ENCODE measurements at regions of chr10 and their contacts with region 1.

Region 1: DNA sequence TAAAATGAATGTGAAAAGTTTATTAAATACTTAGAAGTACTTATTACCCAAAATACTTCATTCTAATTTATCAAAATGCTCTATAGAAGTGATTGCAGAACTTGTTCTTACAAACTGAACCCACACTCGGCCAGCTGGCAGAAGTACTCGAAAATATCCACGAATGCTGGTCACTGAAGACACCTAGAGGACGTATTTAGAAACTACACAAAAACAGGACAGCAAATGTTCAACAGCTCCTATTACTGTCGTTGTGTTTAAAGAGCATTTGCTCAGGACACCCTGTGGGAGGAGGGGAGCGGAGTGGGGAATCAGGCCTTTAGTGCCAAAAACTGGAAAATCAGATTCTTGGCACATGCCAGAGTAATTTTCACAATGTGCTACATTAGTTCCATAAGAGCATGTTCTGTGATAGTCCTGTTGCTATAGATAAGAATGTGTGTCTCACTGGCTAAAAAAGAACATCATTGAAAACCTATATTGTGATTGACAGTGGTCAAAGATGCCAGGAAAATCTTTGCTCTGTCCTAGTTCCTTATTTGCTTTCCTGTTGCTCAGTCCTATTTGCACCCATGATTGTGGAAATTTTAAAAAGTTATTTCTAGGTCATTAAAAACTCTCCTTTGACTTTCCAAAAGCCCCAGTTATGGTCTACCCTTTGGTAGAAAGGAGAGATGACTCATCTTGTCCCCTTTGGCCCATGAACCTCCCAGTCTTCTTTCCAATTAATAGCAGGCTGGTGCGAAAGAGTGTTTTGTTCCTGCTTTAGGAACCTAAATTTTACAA is 49.0 kb upstream of the NRBF2 start:
- DNase-seq: peak in 7 of 9 donors; percentile 20 to 58 (median 43)
- ATAC-seq: peak; percentile 78
- H3K4me3 ChIP-seq: no peak overlapping the region
- H3K4me3 Mint-ChIP-seq: no peak overlapping the region
- H3K27ac ChIP-seq: no peak overlapping the region
- H3K27ac Mint-ChIP-seq: no peak overlapping the region
- H3K4me1 ChIP-seq: no peaks in the 10 kb centered on the region
- H3K4me1 Mint-ChIP-seq: no peaks in the 10 kb centered on the region
- H3K27me3 ChIP-seq: no peaks in the 10 kb centered on the region
- H3K27me3 Mint-ChIP-seq: peaks cover 4 to 31% (median 6%) of the 10 kb centered on the region in 5 donors

Region 2: DNA sequence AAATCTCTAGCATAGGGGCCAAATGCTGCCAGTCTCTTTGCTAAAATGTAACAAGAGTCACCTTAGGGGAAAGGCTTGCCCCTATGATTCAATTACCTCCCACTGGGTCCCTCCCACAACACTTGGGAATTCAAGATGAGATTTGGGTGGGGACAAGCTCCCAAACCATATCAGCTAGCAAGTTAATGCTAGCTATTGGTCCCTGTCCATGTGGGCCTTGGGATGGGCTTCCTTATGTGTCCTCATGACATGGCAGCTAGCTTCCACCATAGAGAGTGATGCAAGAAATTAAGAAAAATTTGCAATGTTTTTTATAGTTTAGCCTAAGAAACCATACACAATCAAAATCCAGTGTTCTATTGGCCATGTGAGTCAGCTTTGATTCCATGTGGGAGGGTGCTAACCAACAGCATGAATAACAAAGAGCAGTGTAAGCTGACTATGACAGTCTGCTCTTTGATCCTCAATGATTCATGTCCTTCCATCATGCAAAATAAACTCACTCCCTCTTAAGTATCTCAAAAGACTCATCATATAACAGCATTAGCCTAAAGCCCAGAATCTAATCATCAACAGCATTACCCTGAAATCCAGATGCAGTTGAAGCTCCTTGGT is 731.6 kb before region 1 on chr10:
- CTCF ChIA-PET with region 1: no interaction called
- POLR2A ChIA-PET with region 1: no interaction called
- intact Hi-C with region 1: no loop called
- DNase-seq: no peak
- ATAC-seq: no peak
- H3K4me3 ChIP-seq: no peak overlapping the region
- H3K4me3 Mint-ChIP-seq: no peak overlapping the region
- H3K27ac ChIP-seq: no peak overlapping the region
- H3K27ac Mint-ChIP-seq: no peak overlapping the region
- H3K4me1 ChIP-seq: no peaks in the 10 kb centered on the region
- H3K4me1 Mint-ChIP-seq: no peaks in the 10 kb centered on the region
- H3K27me3 ChIP-seq: no peaks in the 10 kb centered on the region
- H3K27me3 Mint-ChIP-seq: peaks cover 0 to 20% (median 9%) of the 10 kb centered on the region in 5 donors

Region 3: GRCh38 chr10:62437696-62438095 is 646.4 kb before region 1 on chr10:
- CTCF ChIA-PET with region 1: interaction called, 18 read pairs
- POLR2A ChIA-PET with region 1: no interaction called
- intact Hi-C with region 1: loop called (anchors 1 to 2 kb)
- DNase-seq: peak in 7 of 9 donors; percentile 42 to 71 (median 65)
- ATAC-seq: peak; percentile 79
- H3K4me3 ChIP-seq: no peak overlapping the region
- H3K4me3 Mint-ChIP-seq: no peak overlapping the region
- H3K27ac ChIP-seq: no peak overlapping the region
- H3K27ac Mint-ChIP-seq: no peak overlapping the region
- H3K4me1 ChIP-seq: no peaks in the 10 kb centered on the region
- H3K4me1 Mint-ChIP-seq: peaks cover 0 to 12% (median 3%) of the 10 kb centered on the region in 7 donors
- H3K27me3 ChIP-seq: no peaks in the 10 kb centered on the region
- H3K27me3 Mint-ChIP-seq: peaks cover 0 to 24% (median 4%) of the 10 kb centered on the region in 5 donors

Region 4: GRCh38 chr10:62554632-62555199 is 529.4 kb before region 1 on chr10:
- CTCF ChIA-PET with region 1: no interaction called
- POLR2A ChIA-PET with region 1: no interaction called
- intact Hi-C with region 1: loop called in 1 of 2 experiments (anchors 1 kb)
- DNase-seq: peak in 7 of 9 donors; percentile 8 to 34 (median 24)
- ATAC-seq: peak; percentile 67
- H3K4me3 ChIP-seq: no peak overlapping the region
- H3K4me3 Mint-ChIP-seq: no peak overlapping the region
- H3K27ac ChIP-seq: no peak overlapping the region
- H3K27ac Mint-ChIP-seq: no peak overlapping the region
- H3K4me1 ChIP-seq: no peaks in the 10 kb centered on the region
- H3K4me1 Mint-ChIP-seq: no peaks in the 10 kb centered on the region
- H3K27me3 ChIP-seq: no peaks in the 10 kb centered on the region
- H3K27me3 Mint-ChIP-seq: peaks cover 4 to 34% (median 11%) of the 10 kb centered on the region in 5 donors

Region 5: DNA sequence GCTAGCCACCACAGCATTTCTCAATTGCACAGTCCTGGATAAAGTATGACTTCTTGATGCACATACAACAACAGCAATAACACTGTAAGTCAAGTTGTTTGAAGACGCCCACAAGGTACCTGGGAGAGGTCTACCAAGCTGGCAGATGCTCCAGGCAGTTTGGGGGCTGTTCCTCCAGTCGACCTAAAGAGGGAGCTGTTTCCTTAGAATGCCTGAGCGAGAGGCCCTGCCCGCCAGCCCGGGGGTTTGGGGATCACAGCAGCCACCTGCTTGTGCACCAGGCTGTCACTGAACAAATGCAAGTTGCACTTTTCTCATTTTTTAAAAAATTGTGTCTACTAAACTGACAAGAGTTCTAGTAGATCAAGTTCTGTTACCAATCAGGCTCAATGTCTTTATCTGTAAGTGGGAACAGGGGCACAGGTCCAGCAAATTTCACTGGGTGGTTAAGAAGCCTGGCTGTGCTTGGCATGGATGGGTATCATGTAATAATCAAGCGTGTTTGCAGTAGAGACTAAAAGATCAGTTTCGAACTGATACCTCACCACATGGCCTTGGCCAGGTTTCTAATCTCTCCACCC is 473.4 kb before region 1 on chr10:
- CTCF ChIA-PET with region 1: interaction called, 7 read pairs
- POLR2A ChIA-PET with region 1: no interaction called
- intact Hi-C with region 1: loop called (anchors 1 kb)
- DNase-seq: peak; percentile 48 to 81 (median 74)
- ATAC-seq: peak; percentile 93
- H3K4me3 ChIP-seq: no peak overlapping the region
- H3K4me3 Mint-ChIP-seq: no peak overlapping the region
- H3K27ac ChIP-seq: no peak overlapping the region
- H3K27ac Mint-ChIP-seq: peak overlapping the region in 1 of 9 donors; percentile 50
- H3K4me1 ChIP-seq: no peaks in the 10 kb centered on the region
- H3K4me1 Mint-ChIP-seq: peaks cover 0 to 36% (median 0%) of the 10 kb centered on the region in 7 donors
- H3K27me3 ChIP-seq: no peaks in the 10 kb centered on the region
- H3K27me3 Mint-ChIP-seq: peaks cover 0 to 14% (median 4%) of the 10 kb centered on the region in 5 donors

Region 6: GRCh38 chr10:63150745-63151144 is 66.6 kb after region 1 on chr10:
- CTCF ChIA-PET with region 1: no interaction called
- POLR2A ChIA-PET with region 1: no interaction called
- intact Hi-C with region 1: no loop called
- DNase-seq: no peak
- ATAC-seq: no peak
- H3K4me3 ChIP-seq: no peak overlapping the region
- H3K4me3 Mint-ChIP-seq: no peak overlapping the region
- H3K27ac ChIP-seq: no peak overlapping the region
- H3K27ac Mint-ChIP-seq: peak overlapping the region in 1 of 9 donors; percentile 42
- H3K4me1 ChIP-seq: no peaks in the 10 kb centered on the region
- H3K4me1 Mint-ChIP-seq: peaks cover 13 to 35% (median 29%) of the 10 kb centered on the region in 7 donors
- H3K27me3 ChIP-seq: no peaks in the 10 kb centered on the region
- H3K27me3 Mint-ChIP-seq: no peaks in the 10 kb centered on the region

Measured in naive thymus-derived CD4-positive, alpha-beta T cell (primary cell).